ENCODE measurements at regions of chr1 and their contacts with region 1.

Region 1: DNA sequence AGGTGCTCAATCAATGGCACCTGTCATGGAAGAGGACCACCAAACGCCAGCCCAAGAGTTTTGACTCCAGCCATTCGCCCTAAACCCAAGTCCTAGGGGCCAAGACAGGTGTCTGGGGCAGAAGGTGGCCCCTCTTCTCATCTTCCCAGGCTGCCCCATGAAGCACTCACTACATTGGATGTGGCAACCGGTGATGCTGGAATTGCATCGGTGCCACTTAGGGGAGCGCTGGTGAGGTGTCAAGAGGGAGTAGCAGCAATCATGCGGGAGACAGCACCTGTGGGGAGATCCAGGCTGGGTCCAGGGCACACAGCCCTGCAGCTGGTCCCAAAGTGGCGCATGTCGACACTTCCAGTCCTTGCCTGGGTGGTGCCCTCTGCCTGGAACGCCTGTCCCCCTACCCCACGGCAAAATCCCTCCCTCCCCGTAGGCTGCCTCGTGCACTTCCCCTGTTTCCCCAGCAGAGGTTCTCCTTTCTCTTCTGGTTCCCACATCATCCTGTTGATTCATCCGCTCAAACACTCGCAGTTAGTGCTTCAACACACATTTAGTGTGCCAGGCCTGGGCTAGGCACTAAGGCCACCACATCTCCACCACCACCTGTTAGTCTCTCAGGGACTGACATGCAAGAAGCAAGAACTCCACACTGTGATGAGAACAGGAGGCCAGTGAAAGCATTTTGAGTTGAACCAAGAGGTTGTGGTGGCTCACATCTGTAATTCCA is 18.5 kb downstream of the PLA2G2D start:
- DNase-seq: peak; percentile 47 to 75
- H3K4me3 ChIP-seq: no peak overlapping the region
- H3K27ac ChIP-seq: no peak overlapping the region
- H3K4me1 ChIP-seq: peaks cover 0 to 3% (median 0%) of the 10 kb centered on the region in 4 experiments; a peak in 2 of 7 replicates
- H3K27me3 ChIP-seq: no peaks in the 10 kb centered on the region; a peak in 1 of 7 replicates
- CTCF ChIP-seq: peak; percentile 67 to 89 (median 79)
- EP300 ChIP-seq: no peak
- POLR2A ChIP-seq: no peak
- RAD21 ChIP-seq: peak; percentile 87 to 90

Region 2: DNA sequence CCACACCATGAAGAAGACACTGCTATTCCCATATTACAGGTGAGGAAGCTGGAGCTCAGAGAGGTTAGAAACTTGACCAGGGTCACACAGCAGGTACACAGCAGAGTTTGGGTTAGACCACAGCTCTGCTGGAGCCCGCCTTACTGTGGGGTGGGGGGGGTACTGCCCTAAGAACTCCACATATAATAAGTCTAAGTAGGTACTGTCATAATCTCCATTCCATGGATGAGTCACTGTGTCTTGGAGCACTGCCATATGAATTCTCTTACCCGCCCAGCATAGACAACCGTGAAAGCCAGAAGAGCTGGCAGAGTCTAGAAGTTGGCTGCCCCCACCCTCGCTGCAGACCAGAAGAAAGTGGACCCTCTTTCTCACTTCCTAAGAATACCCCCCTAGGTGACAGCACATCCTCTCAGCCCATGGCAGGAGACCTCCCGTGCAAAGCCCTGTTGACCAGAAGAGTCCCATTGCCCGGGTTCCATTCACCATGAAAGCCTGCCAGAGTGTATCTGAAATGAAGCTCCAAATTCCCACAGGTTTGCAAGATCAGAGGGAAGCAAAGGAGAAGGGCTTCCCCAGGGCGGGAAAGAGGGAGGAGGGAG is 23.8 kb after region 1 on chr1:
- CTCF ChIA-PET with region 1: interaction called, 17 read pairs
- POLR2A ChIA-PET with region 1: interaction called, 3 read pairs
- DNase-seq: no peak
- H3K4me3 ChIP-seq: no peak overlapping the region
- H3K27ac ChIP-seq: no peak overlapping the region
- H3K4me1 ChIP-seq: no peaks in the 10 kb centered on the region
- H3K27me3 ChIP-seq: no peaks in the 10 kb centered on the region
- CTCF ChIP-seq: no peak
- EP300 ChIP-seq: no peak
- POLR2A ChIP-seq: no peak
- RAD21 ChIP-seq: no peak